T-cell (primary cell): ENCODE measurements at regions of chr12 and their contacts with region 1.

Region 1: GRCh38 chr12:15393037-15393436 is 70.7 kb downstream of the PTPRO start:
- DNase-seq: no peak
- ATAC-seq: no peak
- H3K4me3 ChIP-seq: no peak overlapping the region
- H3K4me3 Mint-ChIP-seq: no peak overlapping the region
- H3K27ac ChIP-seq: no peak overlapping the region
- H3K27ac Mint-ChIP-seq: no peak overlapping the region
- H3K4me1 ChIP-seq: no peaks in the 10 kb centered on the region
- H3K4me1 Mint-ChIP-seq: no peaks in the 10 kb centered on the region
- H3K27me3 ChIP-seq: no peaks in the 10 kb centered on the region
- H3K27me3 Mint-ChIP-seq: peaks cover 1 to 5% of the 10 kb centered on the region in 2 donors

Region 2: DNA sequence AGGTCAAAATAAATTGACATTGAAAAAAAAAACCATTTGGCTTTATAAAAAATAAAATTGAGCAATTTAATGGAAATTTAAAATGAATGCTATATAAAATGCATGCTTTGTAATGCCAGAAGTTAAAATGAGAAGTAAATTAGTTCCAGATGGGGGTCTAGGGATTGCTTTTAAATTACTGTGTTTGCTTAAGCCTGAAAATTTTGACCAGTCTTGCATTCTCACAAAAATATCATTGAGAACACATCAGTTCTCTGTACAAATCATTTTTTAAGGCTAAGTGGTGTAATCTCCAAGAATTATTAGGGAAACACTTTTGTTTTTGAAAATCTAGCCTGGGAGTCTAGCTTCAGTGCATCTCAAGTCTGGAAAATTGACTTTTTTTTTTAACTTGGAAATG is 262.5 kb before region 1 on chr12:
- CTCF ChIA-PET with region 1: no interaction called
- POLR2A ChIA-PET with region 1: interaction called in 1 of 2 experiments, 14 read pairs
- DNase-seq: no peak
- ATAC-seq: no peak
- H3K4me3 ChIP-seq: no peak overlapping the region
- H3K4me3 Mint-ChIP-seq: no peak overlapping the region
- H3K27ac ChIP-seq: no peak overlapping the region
- H3K27ac Mint-ChIP-seq: no peak overlapping the region
- H3K4me1 ChIP-seq: no peaks in the 10 kb centered on the region
- H3K4me1 Mint-ChIP-seq: no peaks in the 10 kb centered on the region
- H3K27me3 ChIP-seq: no peaks in the 10 kb centered on the region
- H3K27me3 Mint-ChIP-seq: peaks cover 5% of the 10 kb centered on the region in 2 donors

Region 3: GRCh38 chr12:15404485-15404884 is 11.4 kb after region 1 on chr12:
- CTCF ChIA-PET with region 1: no interaction called
- POLR2A ChIA-PET with region 1: no interaction called
- DNase-seq: no peak
- ATAC-seq: no peak
- H3K4me3 ChIP-seq: no peak overlapping the region
- H3K4me3 Mint-ChIP-seq: no peak overlapping the region
- H3K27ac ChIP-seq: no peak overlapping the region
- H3K27ac Mint-ChIP-seq: no peak overlapping the region
- H3K4me1 ChIP-seq: no peaks in the 10 kb centered on the region
- H3K4me1 Mint-ChIP-seq: no peaks in the 10 kb centered on the region
- H3K27me3 ChIP-seq: peaks cover 0 to 3% of the 10 kb centered on the region in 2 experiments
- H3K27me3 Mint-ChIP-seq: peaks cover 5 to 17% of the 10 kb centered on the region in 2 donors

Region 4: GRCh38 chr12:15423629-15424028 is 30.6 kb after region 1 on chr12:
- CTCF ChIA-PET with region 1: no interaction called
- POLR2A ChIA-PET with region 1: no interaction called
- DNase-seq: no peak
- ATAC-seq: no peak
- H3K4me3 ChIP-seq: no peak overlapping the region
- H3K4me3 Mint-ChIP-seq: no peak overlapping the region
- H3K27ac ChIP-seq: no peak overlapping the region
- H3K27ac Mint-ChIP-seq: no peak overlapping the region
- H3K4me1 ChIP-seq: no peaks in the 10 kb centered on the region
- H3K4me1 Mint-ChIP-seq: no peaks in the 10 kb centered on the region
- H3K27me3 ChIP-seq: no peaks in the 10 kb centered on the region
- H3K27me3 Mint-ChIP-seq: peaks cover 0 to 10% of the 10 kb centered on the region in 2 donors

Region 5: DNA sequence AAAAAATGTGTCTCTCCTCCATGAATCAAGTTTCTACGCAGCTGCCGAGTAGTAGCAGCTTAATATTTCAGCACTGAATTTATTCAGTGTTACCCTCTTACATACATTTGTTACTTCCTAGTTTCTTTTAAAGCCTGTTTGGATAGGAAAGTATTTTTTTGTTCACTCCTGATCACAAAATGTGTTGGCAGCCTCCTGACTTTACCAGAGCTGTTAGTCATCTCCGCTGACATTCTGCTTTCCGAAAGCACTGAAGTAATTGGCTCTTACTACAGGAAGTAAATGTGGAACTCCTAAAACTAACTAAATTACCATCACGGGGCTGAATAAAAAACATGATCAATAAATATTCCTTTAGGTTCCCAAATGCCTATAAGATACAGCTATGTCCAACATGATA is 170.6 kb after region 1 on chr12:
- CTCF ChIA-PET with region 1: no interaction called
- POLR2A ChIA-PET with region 1: no interaction called
- DNase-seq: peak in 4 of 35 experiments; percentile 11 to 59 (median 16)
- ATAC-seq: peak; percentile 75 to 83 (median 78)
- H3K4me3 ChIP-seq: peak overlapping the region; percentile 27 to 40
- H3K4me3 Mint-ChIP-seq: peak overlapping the region; percentile 58 to 80 (median 75)
- H3K27ac ChIP-seq: peak overlapping the region; percentile 77
- H3K27ac Mint-ChIP-seq: peak overlapping the region; percentile 93 to 98
- H3K4me1 ChIP-seq: peaks cover 4 to 40% of the 10 kb centered on the region in 2 experiments
- H3K4me1 Mint-ChIP-seq: peaks cover 53 to 75% (median 73%) of the 10 kb centered on the region in 3 donors
- H3K27me3 ChIP-seq: no peaks in the 10 kb centered on the region
- H3K27me3 Mint-ChIP-seq: peaks cover 0 to 2% of the 10 kb centered on the region in 2 donors